ENCODE measurements at regions of chr17 and their contacts with region 1.

Region 1: GRCh38 chr17:80219013-80219762 is 945 bp downstream of the SGSH start:
- DNase-seq: peak; percentile 93
- H3K4me3 ChIP-seq: peak overlapping the region; percentile 84 to 100 (median 98)
- H3K27ac ChIP-seq: peak overlapping the region; percentile 79 to 91 (median 89)
- H3K4me1 ChIP-seq: peaks cover 15 to 48% (median 44%) of the 10 kb centered on the region in 4 donors
- H3K27me3 ChIP-seq: no peaks in the 10 kb centered on the region
- CTCF ChIP-seq: no peak
- EP300 ChIP-seq: no peak
- POLR2A ChIP-seq: no peak

Region 2: GRCh38 chr17:80152081-80152990 is 66.9 kb before region 1 on chr17:
- intact Hi-C with region 1: loop called (anchors 5 kb)
- DNase-seq: no peak
- H3K4me3 ChIP-seq: no peak overlapping the region
- H3K27ac ChIP-seq: no peak overlapping the region
- H3K4me1 ChIP-seq: peaks cover 5 to 21% (median 18%) of the 10 kb centered on the region in 4 donors
- H3K27me3 ChIP-seq: no peaks in the 10 kb centered on the region
- CTCF ChIP-seq: no peak
- EP300 ChIP-seq: no peak
- POLR2A ChIP-seq: no peak

Region 3: GRCh38 chr17:80263253-80264204 is 44.3 kb after region 1 on chr17:
- intact Hi-C with region 1: loop called (anchors 2 kb)
- DNase-seq: peak; percentile 94
- H3K4me3 ChIP-seq: peak overlapping the region; percentile 36 to 59 (median 48)
- H3K27ac ChIP-seq: peak overlapping the region; percentile 96 to 99 (median 98)
- H3K4me1 ChIP-seq: peaks cover 36 to 54% (median 45%) of the 10 kb centered on the region in 4 donors
- H3K27me3 ChIP-seq: no peaks in the 10 kb centered on the region
- CTCF ChIP-seq: peak in 2 of 3 experiments; percentile 19 to 27
- EP300 ChIP-seq: no peak
- POLR2A ChIP-seq: no peak

Region 4: DNA sequence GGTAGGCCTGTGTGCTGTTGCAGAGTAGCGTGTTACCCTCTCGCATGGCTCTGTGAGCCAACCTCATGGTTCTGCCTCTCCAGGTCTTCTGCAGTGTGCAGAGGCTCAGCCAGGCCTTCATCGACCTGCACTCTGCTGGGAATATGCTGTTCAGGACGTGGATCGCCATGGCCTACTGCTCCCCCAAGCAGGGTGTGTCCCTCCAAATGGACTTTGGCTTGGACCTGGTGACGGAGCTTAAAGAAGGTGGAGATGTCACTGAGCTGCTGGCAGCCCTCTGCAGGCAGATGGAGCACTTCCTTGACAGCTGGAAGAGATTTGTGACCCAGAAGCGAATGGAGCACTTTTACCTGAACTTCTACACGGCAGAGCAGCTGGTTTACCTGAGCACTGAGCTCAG is 119.9 kb after region 1 on chr17:
- intact Hi-C with region 1: no loop called
- DNase-seq: no peak
- H3K4me3 ChIP-seq: no peak overlapping the region
- H3K27ac ChIP-seq: no peak overlapping the region
- H3K4me1 ChIP-seq: no peaks in the 10 kb centered on the region
- H3K27me3 ChIP-seq: no peaks in the 10 kb centered on the region
- CTCF ChIP-seq: no peak
- EP300 ChIP-seq: no peak
- POLR2A ChIP-seq: no peak